ENCODE measurements at regions of chr1 and their contacts with region 1.

Region 1: DNA sequence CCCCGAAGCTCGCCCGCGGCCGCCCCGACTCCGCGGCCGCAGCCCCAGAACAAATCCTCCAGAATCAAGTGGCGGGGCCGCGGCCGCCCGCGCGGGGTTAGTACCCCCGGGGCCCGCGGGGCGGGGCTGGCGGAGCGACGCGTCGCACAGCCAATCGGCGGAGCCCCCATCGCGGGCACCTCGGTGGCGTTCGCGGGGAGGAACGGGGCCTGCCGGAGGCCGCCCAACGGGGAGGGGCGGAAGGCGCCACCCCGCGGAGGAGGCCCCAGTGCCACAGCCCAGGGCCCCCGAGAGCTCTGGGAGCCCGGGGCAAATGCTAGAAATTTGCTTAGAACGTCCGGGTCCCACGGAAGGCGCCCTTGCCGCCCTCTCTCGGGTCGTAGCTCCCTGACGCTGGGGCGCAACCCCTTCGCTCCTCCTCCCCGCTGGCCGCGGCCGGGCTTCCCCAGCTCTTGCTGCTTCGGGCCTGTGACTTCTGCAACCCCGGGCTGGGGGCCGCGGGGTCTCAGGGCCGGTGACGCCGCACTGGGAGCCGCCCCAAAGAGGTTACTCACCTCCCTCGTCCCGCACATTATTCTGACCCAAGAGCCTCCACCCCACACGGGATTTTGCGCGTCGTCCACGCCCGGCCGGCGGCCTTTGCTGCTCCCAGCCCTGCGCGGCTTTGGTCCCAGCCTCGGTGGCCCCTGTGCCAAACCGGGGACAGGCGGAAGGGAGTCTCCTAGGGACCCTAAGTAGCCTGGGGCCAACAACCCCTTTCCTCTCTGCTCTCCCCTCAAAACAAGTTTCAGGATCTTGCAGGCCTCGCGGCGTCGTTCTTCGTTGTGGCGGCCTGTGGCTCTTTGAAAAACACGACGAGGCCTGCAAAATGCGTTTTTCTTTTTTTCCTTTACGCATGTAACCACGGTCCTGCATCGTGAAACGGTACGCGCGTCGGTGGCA is at the start of gene RUNX3:
- DNase-seq: peak; percentile 76
- ATAC-seq: peak; percentile 77
- H3K4me3 ChIP-seq: peak within 1 kb of the TSS; percentile 99
- H3K27ac ChIP-seq: peak within 1 kb of the TSS; percentile 89
- H3K4me1 ChIP-seq: peaks cover 40% of the 10 kb centered on the region
- H3K27me3 ChIP-seq: no peaks in the 10 kb centered on the region
- CTCF ChIP-seq: peak; percentile 14 to 45 (median 35); a peak in 3 of 6 replicates
- EP300 ChIP-seq: peak in 1 of 2 experiments; percentile 39; a peak in 1 of 4 replicates
- POLR2A ChIP-seq: peak; percentile 11; the same call in 1 of the 2 replicates
- RAD21 ChIP-seq: no peak
- polyA plus RNA-seq, gene RUNX3: 21.6 to 26.3 TPM

Region 2: DNA sequence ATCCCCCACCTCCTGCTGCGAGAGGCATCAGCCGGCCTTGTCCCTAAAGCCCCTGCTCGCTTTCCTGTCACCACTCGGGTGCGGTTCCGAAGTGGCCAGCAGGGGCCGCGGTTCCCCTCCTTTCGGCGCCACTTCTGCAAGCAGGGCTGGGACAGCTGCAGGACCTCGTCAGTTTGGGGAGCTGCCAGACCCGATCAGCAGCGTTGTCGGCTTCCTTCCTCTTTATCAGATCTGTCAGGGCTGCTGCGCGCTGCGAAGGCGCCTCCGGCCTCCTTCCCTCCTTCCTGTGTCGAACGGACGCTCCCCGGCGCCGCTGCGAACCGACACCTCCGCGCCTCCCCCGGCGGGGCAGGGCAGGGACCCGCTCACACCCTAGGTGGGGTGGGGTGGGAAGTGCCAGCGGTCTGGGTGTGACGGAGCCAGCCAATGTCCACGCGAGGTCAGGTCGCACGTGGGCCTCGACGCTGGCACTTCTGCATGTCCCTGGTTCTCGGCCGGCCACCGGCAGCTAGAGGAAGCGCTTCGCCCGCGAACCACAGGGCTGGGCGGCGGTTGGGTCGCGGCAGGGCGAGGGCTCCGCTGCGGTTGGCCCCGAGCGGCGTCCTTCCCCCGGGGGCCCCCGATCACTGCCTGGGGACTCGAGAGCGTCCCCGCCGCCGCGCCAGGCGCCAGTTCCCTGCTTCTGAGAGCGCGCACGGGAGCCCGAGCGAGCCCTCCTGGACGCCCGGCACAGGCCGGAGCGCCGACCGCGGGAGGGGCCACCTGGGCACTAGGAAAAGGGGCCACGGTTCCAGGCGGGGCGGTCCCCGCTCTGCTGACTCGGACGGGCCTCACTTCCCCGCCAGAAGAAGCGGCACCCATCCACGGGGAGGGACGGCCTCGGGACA is 82.2 kb before region 1 on chr1:
- CTCF ChIA-PET with region 1: interaction called, 76 read pairs
- POLR2A ChIA-PET with region 1: interaction called, 6 read pairs
- RAD21 ChIA-PET with region 1: interaction called, 35 read pairs
- SMC1A ChIA-PET with region 1: interaction called, 28 read pairs
- in situ Hi-C with region 1: no loop called
- intact Hi-C with region 1: loop called (anchors 5 kb)
- DNase-seq: peak; percentile 71
- ATAC-seq: peak; percentile 97
- H3K4me3 ChIP-seq: peak overlapping the region; percentile 56; the same call in 1 of the 2 replicates
- H3K27ac ChIP-seq: no peak overlapping the region
- H3K4me1 ChIP-seq: no peaks in the 10 kb centered on the region
- H3K27me3 ChIP-seq: no peaks in the 10 kb centered on the region
- CTCF ChIP-seq: peak; percentile 93 to 99 (median 98)
- EP300 ChIP-seq: no peak
- POLR2A ChIP-seq: peak; percentile 84
- RAD21 ChIP-seq: peak; percentile 93

Region 3: DNA sequence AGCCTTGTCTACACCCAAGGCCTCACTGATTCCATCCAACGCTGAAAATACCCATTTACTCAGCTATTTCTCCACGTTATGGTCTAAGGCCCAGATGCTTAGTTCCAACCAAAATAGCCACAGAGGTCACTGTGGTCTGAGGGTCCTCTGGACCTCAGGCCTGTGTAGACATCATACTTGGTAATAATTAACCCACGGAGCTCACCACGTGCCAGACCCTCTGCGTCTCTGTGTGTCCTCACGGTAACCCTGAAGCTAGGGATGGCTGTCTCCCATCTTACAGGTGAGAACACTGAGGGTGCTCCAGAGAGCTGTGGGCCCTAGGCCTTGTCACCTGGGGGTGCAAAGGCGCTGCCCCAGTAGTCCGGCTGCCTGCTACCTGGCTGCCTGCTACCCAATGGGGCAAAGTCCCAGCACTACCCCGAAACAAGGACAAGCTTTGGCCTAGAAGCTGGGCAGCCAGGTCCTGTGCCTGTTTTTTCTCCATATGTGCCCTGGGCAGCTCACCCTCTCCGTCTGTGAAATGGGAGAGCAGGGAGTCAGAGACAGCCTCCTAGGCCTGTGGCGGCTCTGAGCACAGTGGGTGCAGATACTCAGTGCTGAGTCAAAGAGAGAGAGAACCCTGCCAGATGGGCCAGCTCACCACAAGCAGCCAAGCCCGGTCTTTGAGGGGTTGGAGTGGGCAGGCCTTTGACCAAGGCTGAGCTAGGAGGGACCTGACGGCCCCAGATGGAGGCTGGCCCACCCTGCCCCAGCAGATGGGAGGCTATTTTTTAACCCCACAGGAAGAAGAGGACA is 16.6 kb after region 1 on chr1:
- CTCF ChIA-PET with region 1: interaction called, 314 read pairs
- POLR2A ChIA-PET with region 1: interaction called, 12 read pairs
- RAD21 ChIA-PET with region 1: interaction called, 51 read pairs
- SMC1A ChIA-PET with region 1: interaction called, 391 read pairs
- in situ Hi-C with region 1: no loop called
- intact Hi-C with region 1: no loop called
- DNase-seq: peak; percentile 70
- ATAC-seq: peak; percentile 84
- H3K4me3 ChIP-seq: 0 out of 2 replicates have a peak overlapping the region, but pooled peaks have one; percentile 44
- H3K27ac ChIP-seq: peak overlapping the region; percentile 85
- H3K4me1 ChIP-seq: peaks cover 56% of the 10 kb centered on the region
- H3K27me3 ChIP-seq: no peaks in the 10 kb centered on the region
- CTCF ChIP-seq: no peak
- EP300 ChIP-seq: peak; percentile 22 to 47; a peak in 2 of 4 replicates
- POLR2A ChIP-seq: peak; percentile 61; the same call in 1 of the 2 replicates
- RAD21 ChIP-seq: no peak

Region 4: GRCh38 chr1:24964811-24965570 is 34.5 kb after region 1 on chr1:
- CTCF ChIA-PET with region 1: interaction called, 314 read pairs
- POLR2A ChIA-PET with region 1: interaction called, 23 read pairs
- RAD21 ChIA-PET with region 1: interaction called, 121 read pairs
- SMC1A ChIA-PET with region 1: interaction called, 391 read pairs
- in situ Hi-C with region 1: no loop called
- intact Hi-C with region 1: loop called (anchors 2 kb)
- DNase-seq: peak; percentile 96
- ATAC-seq: peak; percentile 81
- H3K4me3 ChIP-seq: peak overlapping the region; percentile 97
- H3K27ac ChIP-seq: peak overlapping the region; percentile 98
- H3K4me1 ChIP-seq: peaks cover 29% of the 10 kb centered on the region
- H3K27me3 ChIP-seq: no peaks in the 10 kb centered on the region
- CTCF ChIP-seq: no peak
- EP300 ChIP-seq: peak in 1 of 2 experiments; percentile 84; a peak in 3 of 4 replicates
- POLR2A ChIP-seq: peak; percentile 86
- RAD21 ChIP-seq: peak; percentile 19; the same call in 1 of the 2 replicates

Region 5: DNA sequence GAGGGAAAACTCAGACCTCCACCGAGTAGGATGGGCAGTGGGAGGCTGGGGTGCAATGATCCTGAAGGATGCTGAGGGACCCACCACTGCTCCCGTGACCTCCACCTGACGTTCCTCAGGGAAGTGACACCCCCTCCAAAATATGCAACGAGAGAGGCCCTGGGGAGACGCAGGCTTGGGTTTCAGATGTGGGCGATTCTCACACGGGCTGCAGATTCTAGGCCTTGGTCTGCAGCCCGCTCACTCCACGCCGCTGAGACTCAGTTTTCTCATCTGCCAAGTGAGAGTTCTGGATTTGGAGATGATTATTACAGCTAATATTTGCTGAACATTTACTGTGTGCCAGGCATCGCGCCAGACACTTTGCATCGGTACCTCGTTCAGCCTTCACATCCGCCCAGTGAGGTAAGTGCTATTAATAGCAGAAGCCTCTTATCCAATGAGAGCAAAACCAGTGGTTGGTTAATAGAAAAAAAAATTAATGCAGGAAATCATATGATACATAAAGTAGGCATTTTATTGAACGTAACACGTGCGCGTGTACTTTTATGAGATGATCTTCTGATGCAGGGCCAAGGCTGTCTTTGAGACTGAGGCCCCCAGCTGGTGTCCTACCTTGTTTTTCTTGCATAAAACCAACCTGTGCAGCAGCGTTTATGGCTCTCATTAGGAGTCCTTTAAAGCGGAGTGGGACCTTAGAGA is 101.6 kb after region 1 on chr1:
- CTCF ChIA-PET with region 1: interaction called, 128 read pairs
- POLR2A ChIA-PET with region 1: interaction called, 75 read pairs
- RAD21 ChIA-PET with region 1: interaction called, 150 read pairs
- SMC1A ChIA-PET with region 1: interaction called, 239 read pairs
- in situ Hi-C with region 1: no loop called
- intact Hi-C with region 1: loop called (anchors 1 kb)
- DNase-seq: peak; percentile 94
- ATAC-seq: peak; percentile 44
- H3K4me3 ChIP-seq: peak overlapping the region; percentile 73
- H3K27ac ChIP-seq: peak overlapping the region; percentile 100
- H3K4me1 ChIP-seq: peaks cover 93% of the 10 kb centered on the region
- H3K27me3 ChIP-seq: no peaks in the 10 kb centered on the region
- CTCF ChIP-seq: peak in 1 of 3 experiments; percentile 30; a peak in 1 of 6 replicates
- EP300 ChIP-seq: peak in 1 of 2 experiments; percentile 17; a peak in 1 of 4 replicates
- POLR2A ChIP-seq: peak; percentile 66
- RAD21 ChIP-seq: peak; percentile 33; the same call in 1 of the 2 replicates

Region 6: DNA sequence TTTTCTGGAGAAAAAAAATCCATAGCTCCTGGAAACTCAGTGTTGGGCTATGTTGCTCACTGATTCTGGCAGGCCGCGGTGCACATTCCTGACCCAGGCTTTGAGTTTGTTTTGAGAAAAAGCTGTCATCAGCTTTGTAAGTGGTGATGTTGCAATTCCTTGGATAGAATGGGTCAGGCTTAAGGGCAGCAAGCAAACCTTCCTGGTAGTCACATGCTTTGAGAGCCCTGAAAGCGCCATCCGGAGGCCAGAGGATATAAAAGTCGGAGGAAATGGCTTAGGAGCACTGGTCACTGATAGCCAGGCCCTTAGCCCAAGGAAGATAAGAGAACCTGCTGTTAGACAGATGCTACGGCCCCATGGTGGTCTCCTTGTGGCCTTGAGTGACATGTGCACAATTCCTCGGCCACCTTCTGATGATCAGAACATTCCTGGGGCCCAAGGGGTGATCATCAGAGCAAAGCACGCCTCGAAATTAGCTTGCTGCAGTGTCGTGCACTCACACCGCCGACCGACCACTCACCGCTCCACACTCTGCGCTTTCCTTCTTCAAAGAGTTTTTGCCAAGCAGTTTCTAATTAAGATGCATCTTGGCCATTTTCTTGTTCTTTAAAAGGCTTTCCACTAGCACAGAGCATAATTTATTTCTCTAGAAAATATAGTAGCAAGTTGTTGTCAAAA is 764.8 kb after region 1 on chr1:
- CTCF ChIA-PET with region 1: no interaction called
- POLR2A ChIA-PET with region 1: no interaction called
- RAD21 ChIA-PET with region 1: no interaction called
- SMC1A ChIA-PET with region 1: no interaction called
- in situ Hi-C with region 1: no loop called
- intact Hi-C with region 1: no loop called
- DNase-seq: no peak
- ATAC-seq: no peak
- H3K4me3 ChIP-seq: no peak overlapping the region
- H3K27ac ChIP-seq: no peak overlapping the region
- H3K4me1 ChIP-seq: no peaks in the 10 kb centered on the region
- H3K27me3 ChIP-seq: peaks cover 4 to 15% of the 10 kb centered on the region in 2 experiments
- CTCF ChIP-seq: no peak
- EP300 ChIP-seq: no peak
- POLR2A ChIP-seq: no peak
- RAD21 ChIP-seq: no peak